CD8-positive, alpha-beta memory T cell (primary cell): ENCODE measurements at regions of chr3 and their contacts with region 1.

Region 1: DNA sequence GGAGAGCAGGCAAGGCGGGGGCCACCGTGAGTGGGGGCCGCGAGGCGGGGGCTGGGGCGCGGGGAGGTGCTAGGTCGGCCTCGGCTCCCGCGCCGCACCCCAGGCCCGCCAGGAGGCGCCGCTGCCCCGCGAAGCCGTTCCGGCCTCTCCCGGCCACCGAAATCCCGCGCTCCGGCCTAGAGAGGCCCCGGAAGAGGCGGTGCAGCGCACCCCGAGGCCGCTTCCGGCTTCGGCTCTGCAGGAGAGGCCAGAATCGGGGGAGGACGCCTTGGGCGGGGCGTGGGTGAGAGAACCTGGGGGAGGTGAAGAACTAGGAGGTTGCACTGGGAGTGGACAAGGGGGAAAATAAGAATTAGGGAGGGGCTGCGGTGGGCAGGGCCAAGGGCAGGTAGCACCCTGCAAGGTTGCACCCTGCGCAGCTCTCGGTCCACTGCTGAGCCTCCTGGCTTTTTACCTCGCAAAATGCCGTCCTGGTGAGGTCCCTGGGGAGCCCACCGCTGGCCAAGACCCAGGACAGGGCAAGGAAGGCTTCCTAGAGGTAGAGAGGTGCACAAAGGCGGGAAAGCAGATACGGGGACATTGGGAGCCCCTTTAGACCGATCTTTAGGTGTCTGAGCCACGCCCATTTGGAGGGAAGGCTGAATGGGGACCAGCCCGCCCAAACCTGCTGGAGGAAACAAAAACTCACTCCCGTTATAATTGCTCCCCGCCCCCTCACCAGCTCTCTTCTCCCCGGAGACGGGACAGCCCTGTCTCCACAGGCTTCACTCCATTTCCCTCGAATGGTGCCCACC is 8.4 kb upstream of the GNAI2 start:
- DNase-seq: peak; percentile 88 to 93 (median 89)
- H3K4me3 ChIP-seq: peak overlapping the region; percentile 86
- H3K4me3 Mint-ChIP-seq: peak overlapping the region; percentile 89 to 99 (median 94)
- H3K27ac ChIP-seq: peak overlapping the region; percentile 63
- H3K27ac Mint-ChIP-seq: peak overlapping the region; percentile 79 to 96 (median 92)
- H3K4me1 ChIP-seq: peaks cover 20% of the 10 kb centered on the region
- H3K4me1 Mint-ChIP-seq: peaks cover 15 to 33% (median 24%) of the 10 kb centered on the region in 3 donors
- H3K27me3 ChIP-seq: no peaks in the 10 kb centered on the region
- H3K27me3 Mint-ChIP-seq: peaks cover 0 to 3% of the 10 kb centered on the region in 2 donors

Region 2: DNA sequence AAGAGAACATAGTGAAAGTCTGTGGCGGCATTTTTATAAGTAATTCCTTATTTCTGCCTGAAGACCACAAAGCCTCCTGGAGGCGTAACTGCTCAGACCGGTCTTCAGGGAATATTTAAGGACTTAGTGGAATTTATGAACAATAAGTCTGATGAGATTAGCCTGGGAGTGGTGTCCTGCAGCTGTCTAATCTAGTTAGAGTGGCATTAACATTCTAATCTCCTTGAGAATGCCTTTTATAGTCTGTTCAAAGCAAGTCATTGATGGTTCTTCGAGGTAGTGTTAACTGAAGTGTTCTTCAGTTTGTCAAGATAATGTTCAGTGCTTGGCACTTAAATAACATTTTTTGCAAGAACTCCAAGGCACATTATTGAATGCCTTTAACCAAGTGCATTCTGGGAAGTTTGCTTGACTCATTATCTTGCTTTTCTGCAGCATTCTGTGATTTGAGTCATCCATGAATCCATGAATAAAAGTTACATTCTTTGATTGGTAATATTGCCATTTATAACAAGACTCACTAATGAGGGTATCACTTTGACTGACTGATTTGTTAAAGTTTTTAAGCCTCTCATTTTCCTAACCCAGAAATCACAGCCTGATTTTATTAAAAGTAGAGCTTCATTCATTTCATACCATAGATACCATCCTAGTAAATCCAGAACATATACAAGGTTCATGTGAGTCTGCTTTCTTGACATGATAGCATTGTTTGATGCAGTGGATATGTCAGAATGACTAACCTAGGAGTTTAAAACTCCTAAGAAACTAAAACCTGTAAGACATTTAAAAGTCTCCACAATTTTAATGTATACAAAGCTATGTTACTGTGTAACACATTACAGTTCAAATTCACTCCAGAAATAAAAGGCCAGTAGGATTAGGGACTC is 126.4 kb before region 1 on chr3:
- CTCF ChIA-PET with region 1: no interaction called
- POLR2A ChIA-PET with region 1: no interaction called
- DNase-seq: no peak
- H3K4me3 ChIP-seq: no peak overlapping the region
- H3K4me3 Mint-ChIP-seq: no peak overlapping the region
- H3K27ac ChIP-seq: no peak overlapping the region
- H3K27ac Mint-ChIP-seq: peak overlapping the region in 2 of 8 donors; percentile 38 to 60
- H3K4me1 ChIP-seq: no peaks in the 10 kb centered on the region
- H3K4me1 Mint-ChIP-seq: peaks cover 7 to 21% (median 8%) of the 10 kb centered on the region in 3 donors
- H3K27me3 ChIP-seq: no peaks in the 10 kb centered on the region
- H3K27me3 Mint-ChIP-seq: no peaks in the 10 kb centered on the region

Region 3: GRCh38 chr3:50205414-50206276 is 21.9 kb before region 1 on chr3:
- CTCF ChIA-PET with region 1: interaction called, 12 read pairs
- POLR2A ChIA-PET with region 1: no interaction called
- DNase-seq: peak in 2 of 5 donors; percentile 10 to 28
- H3K4me3 ChIP-seq: no peak overlapping the region
- H3K4me3 Mint-ChIP-seq: peak overlapping the region in 2 of 7 donors; percentile 36 to 53
- H3K27ac ChIP-seq: no peak overlapping the region
- H3K27ac Mint-ChIP-seq: no peak overlapping the region
- H3K4me1 ChIP-seq: no peaks in the 10 kb centered on the region
- H3K4me1 Mint-ChIP-seq: peaks cover 0 to 3% (median 2%) of the 10 kb centered on the region in 3 donors
- H3K27me3 ChIP-seq: peaks cover 27% of the 10 kb centered on the region
- H3K27me3 Mint-ChIP-seq: peaks cover 34 to 39% of the 10 kb centered on the region in 2 donors

Region 4: DNA sequence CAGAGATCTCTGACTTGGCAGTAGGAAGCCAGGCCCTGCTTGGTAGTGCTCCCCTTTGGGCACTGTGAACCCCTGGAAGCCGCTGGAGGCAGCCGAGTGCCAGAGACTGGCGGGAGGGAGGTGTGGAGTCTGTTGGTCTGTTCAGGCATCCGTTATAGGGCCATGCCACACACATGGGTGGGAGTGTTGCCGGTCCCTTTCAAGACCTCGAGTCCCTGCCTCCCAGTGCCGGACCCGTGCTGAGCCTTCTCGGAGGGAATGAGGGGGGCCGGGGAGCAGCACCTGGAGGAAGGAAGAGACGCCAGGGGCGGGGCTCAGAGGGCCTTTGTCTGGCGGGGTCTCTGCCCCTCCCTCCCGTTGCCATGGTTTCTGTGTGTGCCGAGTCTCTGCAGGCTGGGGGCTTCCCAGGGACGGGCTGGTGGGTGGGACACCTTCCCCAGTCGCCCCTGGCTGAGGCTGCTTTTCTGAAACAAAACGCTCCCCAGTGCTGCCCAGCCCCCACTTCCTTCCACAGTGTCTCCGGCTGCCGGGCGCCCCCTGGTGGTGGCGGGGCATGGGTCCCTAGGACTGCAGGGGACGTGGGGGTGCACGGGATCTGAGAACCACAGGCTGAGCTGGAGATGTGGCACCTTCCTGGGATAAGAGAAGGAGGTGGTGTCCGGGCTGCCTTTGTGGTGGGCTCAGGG is 18.4 kb after region 1 on chr3:
- CTCF ChIA-PET with region 1: interaction called, 241 read pairs
- POLR2A ChIA-PET with region 1: interaction called, 14 read pairs
- DNase-seq: peak; percentile 88 to 97 (median 94)
- H3K4me3 ChIP-seq: peak overlapping the region; percentile 59
- H3K4me3 Mint-ChIP-seq: peak overlapping the region; percentile 70 to 79 (median 76)
- H3K27ac ChIP-seq: peak overlapping the region; percentile 75
- H3K27ac Mint-ChIP-seq: peak overlapping the region; percentile 81 to 99 (median 96)
- H3K4me1 ChIP-seq: peaks cover 92% of the 10 kb centered on the region
- H3K4me1 Mint-ChIP-seq: peaks cover 65 to 91% (median 75%) of the 10 kb centered on the region in 3 donors
- H3K27me3 ChIP-seq: no peaks in the 10 kb centered on the region
- H3K27me3 Mint-ChIP-seq: no peaks in the 10 kb centered on the region

Region 5: GRCh38 chr3:50272911-50273693 is 45.5 kb after region 1 on chr3:
- CTCF ChIA-PET with region 1: interaction called, 22 read pairs
- POLR2A ChIA-PET with region 1: no interaction called
- DNase-seq: peak; percentile 73 to 87 (median 83)
- H3K4me3 ChIP-seq: peak overlapping the region; percentile 51
- H3K4me3 Mint-ChIP-seq: peak overlapping the region in 6 of 7 donors; percentile 45 to 77 (median 72)
- H3K27ac ChIP-seq: no peak overlapping the region
- H3K27ac Mint-ChIP-seq: peak overlapping the region in 7 of 8 donors; percentile 10 to 85 (median 63)
- H3K4me1 ChIP-seq: peaks cover 28% of the 10 kb centered on the region
- H3K4me1 Mint-ChIP-seq: peaks cover 23 to 32% (median 24%) of the 10 kb centered on the region in 3 donors
- H3K27me3 ChIP-seq: peaks cover 28% of the 10 kb centered on the region
- H3K27me3 Mint-ChIP-seq: peaks cover 27 to 35% of the 10 kb centered on the region in 2 donors

Region 6: DNA sequence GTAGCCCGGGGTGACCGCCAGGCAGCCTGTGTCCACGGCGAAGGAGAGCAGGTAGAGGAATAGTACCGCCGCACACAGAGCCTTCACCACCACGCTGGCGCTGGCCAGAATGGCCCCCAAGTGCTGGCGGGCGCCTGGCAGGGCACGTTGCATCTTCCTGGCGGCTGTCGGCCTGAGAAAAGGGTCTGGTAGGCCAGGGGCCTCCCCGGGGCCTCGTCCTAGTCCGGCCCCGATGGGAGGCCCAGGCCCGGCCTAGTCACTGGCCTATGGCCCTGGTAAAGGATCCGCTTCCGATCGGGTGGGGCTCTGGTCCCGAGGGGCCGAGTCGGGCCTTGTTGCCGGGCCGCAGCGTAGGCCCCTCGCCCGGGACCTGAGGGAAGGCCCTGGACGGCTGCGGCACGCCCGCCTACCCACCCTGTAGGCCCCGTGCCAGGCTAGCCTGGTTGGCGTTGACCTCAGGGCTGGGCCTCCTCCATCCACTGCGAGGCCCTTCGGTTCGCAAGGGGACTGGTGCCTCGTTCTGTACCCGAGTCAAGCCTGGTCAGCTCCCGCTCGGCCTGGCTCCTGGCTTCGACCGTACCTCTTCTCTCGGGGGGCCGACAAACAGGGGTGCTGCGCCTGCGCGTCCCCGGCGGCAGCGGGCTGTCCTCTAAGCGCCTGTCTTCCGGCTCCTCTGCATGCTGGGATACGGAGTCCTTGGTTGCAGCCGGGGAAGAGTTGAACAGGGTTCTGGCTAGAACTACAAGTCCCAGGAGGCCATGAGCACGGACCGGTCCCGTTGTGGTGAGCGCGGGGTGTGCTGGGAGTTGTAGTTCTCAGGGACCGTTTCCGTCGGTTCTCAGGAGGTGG is 131.5 kb after region 1 on chr3 and contains the start of gene TMEM115:
- CTCF ChIA-PET with region 1: no interaction called
- POLR2A ChIA-PET with region 1: no interaction called
- DNase-seq: peak; percentile 91 to 98 (median 94)
- H3K4me3 ChIP-seq: peak within 1 kb of the TSS; percentile 95
- H3K4me3 Mint-ChIP-seq: peak within 1 kb of the TSS; percentile 94 to 99 (median 96)
- H3K27ac ChIP-seq: peak within 1 kb of the TSS; percentile 76
- H3K27ac Mint-ChIP-seq: peak within 1 kb of the TSS; percentile 81 to 99 (median 96)
- H3K4me1 ChIP-seq: peaks cover 38% of the 10 kb centered on the region
- H3K4me1 Mint-ChIP-seq: peaks cover 36 to 63% (median 40%) of the 10 kb centered on the region in 3 donors
- H3K27me3 ChIP-seq: no peaks in the 10 kb centered on the region
- H3K27me3 Mint-ChIP-seq: peaks cover 0 to 2% of the 10 kb centered on the region in 2 donors
- total RNA-seq, gene TMEM115: 30.5 to 33.2 TPM

Region 7: DNA sequence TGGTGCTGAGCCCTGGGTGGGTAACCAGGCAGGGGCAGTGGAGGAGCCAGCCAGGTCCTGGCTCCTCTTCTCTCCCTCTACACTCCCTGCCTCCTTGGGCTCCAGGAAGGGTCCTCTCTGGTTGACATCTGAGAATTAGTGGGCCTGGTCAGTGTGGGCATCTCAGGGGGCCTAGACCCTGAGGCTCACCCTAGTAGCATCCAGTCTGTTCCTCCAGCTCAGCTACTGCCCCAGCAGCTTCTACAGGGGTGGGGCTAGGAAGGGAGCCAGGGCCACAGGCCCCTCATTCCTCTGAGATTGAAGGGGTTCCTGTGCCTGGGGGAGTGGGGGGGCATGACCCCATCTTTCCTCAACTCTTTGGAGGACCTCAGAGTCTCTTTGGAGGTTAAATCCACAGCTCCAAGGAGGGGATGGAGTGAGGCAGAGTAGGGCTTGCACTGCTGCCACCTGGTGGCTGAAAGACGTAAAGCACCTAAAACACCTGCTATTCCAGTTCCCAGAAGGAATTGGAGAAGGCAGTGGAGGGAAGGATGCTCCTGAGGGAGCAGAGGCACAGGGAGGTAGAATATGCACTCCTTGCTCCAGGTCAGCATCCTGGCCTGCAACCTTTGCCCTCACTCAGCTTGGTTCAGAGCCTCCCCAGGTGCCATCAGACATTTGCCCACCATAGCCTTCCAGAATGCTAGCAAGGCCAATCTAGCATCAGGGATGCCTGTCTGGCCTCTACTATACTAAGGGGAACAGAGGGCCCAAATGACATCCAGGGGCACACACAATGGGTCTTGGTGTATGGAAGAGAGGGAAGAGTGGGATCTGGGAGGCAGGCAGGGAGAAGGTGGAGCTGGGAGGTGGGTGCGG is 314.8 kb after region 1 on chr3:
- CTCF ChIA-PET with region 1: no interaction called
- POLR2A ChIA-PET with region 1: no interaction called
- DNase-seq: peak; percentile 50 to 68 (median 53)
- H3K4me3 ChIP-seq: no peak overlapping the region
- H3K4me3 Mint-ChIP-seq: no peak overlapping the region
- H3K27ac ChIP-seq: no peak overlapping the region
- H3K27ac Mint-ChIP-seq: no peak overlapping the region
- H3K4me1 ChIP-seq: no peaks in the 10 kb centered on the region
- H3K4me1 Mint-ChIP-seq: peaks cover 0 to 2% (median 0%) of the 10 kb centered on the region in 3 donors
- H3K27me3 ChIP-seq: no peaks in the 10 kb centered on the region
- H3K27me3 Mint-ChIP-seq: peaks cover 8 to 19% of the 10 kb centered on the region in 2 donors